Ascending aorta (tissue), 2 donors: ENCODE measurements at regions of chr19 and their contacts with region 1.

Region 1: DNA sequence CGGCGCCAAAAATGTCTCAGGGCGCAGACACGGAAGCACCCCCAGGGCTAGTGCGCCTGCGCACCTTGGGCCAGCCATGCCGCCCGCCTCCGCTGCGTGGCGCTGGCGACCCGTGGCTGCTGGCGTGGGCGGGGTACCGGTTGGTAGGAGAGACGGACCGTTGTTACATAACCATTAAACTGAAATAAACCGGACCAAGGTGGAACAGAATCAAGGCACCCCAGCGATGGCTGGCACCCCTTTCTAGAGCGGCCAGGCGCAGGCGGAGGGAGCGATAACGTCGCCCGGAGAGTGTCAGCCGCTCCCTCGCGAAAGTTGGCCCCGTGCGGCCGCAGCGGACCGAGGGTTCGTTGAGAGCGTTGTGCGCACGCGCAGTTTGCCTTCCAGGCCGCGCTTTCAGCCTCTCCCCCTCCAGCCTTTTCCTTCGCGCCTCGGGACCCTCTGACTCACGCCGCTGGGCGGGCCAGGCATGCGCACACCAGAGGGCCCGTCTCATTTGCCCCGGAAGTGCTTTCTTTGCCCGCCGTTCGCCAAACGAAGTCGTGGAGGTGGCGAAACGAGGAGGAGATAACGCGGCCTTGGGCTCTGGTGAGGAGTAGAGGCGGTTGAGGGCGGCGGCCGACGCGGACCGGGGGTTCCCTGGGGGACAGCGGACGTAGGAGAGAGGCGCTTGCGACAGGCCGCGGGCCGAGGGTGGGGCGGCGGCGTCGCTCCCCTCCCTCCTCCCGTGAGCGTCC is at the starts of genes PLEKHJ1 and SF3A2:
- DNase-seq: peak; percentile 86 to 98
- H3K4me3 ChIP-seq: peak within 1 kb of the TSS; percentile 85 to 100
- H3K27ac ChIP-seq: peak within 1 kb of the TSS; percentile 97 to 98
- H3K4me1 ChIP-seq: peaks cover 19 to 44% of the 10 kb centered on the region in 2 donors
- H3K27me3 ChIP-seq: no peaks in the 10 kb centered on the region
- CTCF ChIP-seq: peak; percentile 99 to 100 (median 99)
- total RNA-seq, gene PLEKHJ1: 23.9 TPM
- total RNA-seq, gene SF3A2: 21.3 TPM

Region 2: GRCh38 chr19:2151339-2152229 is 84.9 kb before region 1 on chr19 and contains the start of gene AP3D1:
- intact Hi-C with region 1: loop called (anchors 1 kb)
- DNase-seq: peak; percentile 99 to 100
- H3K4me3 ChIP-seq: peak within 1 kb of the TSS; percentile 82 to 96
- H3K27ac ChIP-seq: peak within 1 kb of the TSS; percentile 83 to 87
- H3K4me1 ChIP-seq: peaks cover 14 to 31% of the 10 kb centered on the region in 2 donors
- H3K27me3 ChIP-seq: no peaks in the 10 kb centered on the region
- CTCF ChIP-seq: peak in 1 of 3 experiments; percentile 38
- total RNA-seq, gene AP3D1: 98.8 TPM

Region 3: DNA sequence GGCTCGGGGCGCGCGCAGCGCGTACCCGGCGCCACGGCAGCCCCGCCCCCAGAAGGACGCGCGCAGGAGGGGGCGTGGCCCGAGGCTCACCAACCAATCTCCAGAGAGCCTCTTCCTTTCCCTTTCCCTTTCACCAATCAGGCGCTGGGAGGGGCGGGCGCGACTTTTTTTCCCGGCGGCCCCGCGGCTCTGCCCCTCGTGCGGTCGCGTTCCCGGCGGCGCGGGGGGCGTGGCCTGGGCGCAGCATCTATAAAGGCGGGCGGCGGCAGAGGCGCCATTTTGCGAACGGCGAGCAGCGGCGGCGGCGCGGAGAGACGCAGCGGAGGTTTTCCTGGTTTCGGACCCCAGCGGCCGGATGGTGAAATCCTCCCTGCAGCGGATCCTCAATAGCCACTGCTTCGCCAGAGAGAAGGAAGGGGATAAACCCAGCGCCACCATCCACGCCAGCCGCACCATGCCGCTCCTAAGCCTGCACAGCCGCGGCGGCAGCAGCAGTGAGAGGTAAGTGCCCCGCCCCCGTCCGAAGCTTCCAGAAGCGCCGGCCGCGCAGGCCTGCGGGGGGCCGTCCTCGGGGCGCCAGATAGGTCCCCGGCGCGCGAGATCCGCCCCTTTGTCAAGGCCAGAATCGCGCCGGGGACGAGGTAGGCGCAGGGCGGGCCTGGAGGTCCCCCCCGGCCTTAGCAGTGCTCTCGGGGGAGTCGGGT is 32.9 kb after region 1 on chr19:
- intact Hi-C with region 1: loop called (anchors 1 kb)
- DNase-seq: peak; percentile 91 to 99
- H3K4me3 ChIP-seq: peak overlapping the region; percentile 95 to 96
- H3K27ac ChIP-seq: peak overlapping the region; percentile 99 to 100
- H3K4me1 ChIP-seq: peaks cover 17 to 41% of the 10 kb centered on the region in 2 donors
- H3K27me3 ChIP-seq: no peaks in the 10 kb centered on the region
- CTCF ChIP-seq: peak in 1 of 3 experiments; percentile 51

Region 4: DNA sequence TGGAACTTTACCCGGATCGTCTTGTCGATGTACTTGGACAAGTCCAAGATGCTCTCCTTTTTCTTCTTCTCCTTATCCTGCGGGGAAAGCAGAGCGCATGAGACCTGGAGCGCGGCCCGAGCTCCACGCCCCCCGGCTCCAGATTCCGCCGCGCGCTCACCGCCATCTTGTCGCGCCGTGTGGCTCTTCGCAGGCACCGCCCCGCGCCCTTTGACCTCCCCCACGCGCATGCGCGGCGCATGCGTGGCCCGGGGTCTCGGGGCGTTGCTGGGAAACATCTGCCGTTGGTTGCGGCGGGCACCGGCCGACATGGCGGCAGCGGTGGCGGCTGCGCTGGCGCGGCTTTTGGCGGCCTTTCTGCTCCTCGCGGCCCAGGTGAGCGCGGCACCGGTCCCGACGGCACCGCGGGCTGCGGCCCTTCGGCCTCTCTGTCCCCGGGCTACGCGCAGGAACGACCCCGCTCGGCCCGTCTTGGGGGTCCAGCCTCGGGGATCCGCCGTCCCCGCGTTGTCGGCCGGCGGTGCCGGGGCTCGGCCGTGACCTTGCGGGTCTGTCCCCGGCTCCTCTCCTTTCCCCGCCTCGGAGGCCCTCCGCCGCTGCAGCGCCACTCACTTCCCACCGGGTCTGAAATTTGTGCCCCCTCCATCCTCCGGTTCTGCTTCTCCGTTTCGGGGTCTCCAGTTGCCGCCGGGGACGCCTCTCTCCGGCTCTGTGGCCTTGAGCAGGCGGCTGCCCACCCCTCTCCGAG is 92.1 kb after region 1 on chr19 and contains the starts of genes LSM7 and SPPL2B:
- intact Hi-C with region 1: loop called (anchors 2 kb)
- DNase-seq: peak; percentile 76 to 94
- H3K4me3 ChIP-seq: peak within 1 kb of the TSS; percentile 73 to 84
- H3K27ac ChIP-seq: peak within 1 kb of the TSS; percentile 48 to 64
- H3K4me1 ChIP-seq: peaks cover 2 to 34% of the 10 kb centered on the region in 2 donors
- H3K27me3 ChIP-seq: no peaks in the 10 kb centered on the region
- CTCF ChIP-seq: no peak
- total RNA-seq, gene LSM7: 31.4 TPM
- total RNA-seq, gene SPPL2B: 95.7 TPM

Region 5: GRCh38 chr19:2391118-2391725 is 154.7 kb after region 1 on chr19:
- intact Hi-C with region 1: loop called (anchors 5 kb)
- DNase-seq: no peak
- H3K4me3 ChIP-seq: no peak overlapping the region
- H3K27ac ChIP-seq: no peak overlapping the region
- H3K4me1 ChIP-seq: no peaks in the 10 kb centered on the region
- H3K27me3 ChIP-seq: no peaks in the 10 kb centered on the region
- CTCF ChIP-seq: peak; percentile 62 to 83 (median 74)